Activated naive CD4-positive, alpha-beta T cell treated with anti-CD3 and anti-CD28 coated beads for 36 hours (primary cell): ENCODE measurements at regions of chr17 and their contacts with region 1.

Region 1: DNA sequence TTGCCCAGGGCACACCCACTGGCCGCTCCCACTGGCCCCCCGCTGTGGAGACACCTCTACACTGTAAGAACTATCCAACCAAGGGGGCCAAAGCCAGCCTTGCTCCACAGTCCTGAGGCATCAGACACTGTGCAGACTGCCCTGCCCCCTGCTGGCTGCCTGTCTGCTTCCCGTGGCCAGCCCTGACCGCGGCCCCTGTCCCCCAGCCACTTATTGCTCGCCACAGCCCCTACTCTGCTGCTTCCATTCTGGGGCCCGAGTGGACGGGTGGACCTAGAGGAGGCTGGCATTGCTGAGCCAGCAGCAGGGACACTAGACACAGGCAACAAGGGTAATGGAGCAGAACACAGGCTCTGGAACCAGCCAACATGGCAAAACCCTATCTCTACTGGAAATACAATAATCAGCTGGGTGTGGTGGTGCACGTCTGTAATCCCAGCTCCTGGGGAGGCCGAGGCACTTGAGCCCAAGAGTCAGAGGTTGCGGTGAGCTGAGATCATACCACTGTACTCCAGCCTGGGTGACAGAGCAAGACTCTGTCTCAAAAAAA is 19.7 kb upstream of the LRRC37A3 start:
- DNase-seq: peak; percentile 67
- H3K4me3 Mint-ChIP-seq: no peak overlapping the region
- H3K27ac Mint-ChIP-seq: no peak overlapping the region
- H3K4me1 Mint-ChIP-seq: no peaks in the 10 kb centered on the region
- H3K27me3 Mint-ChIP-seq: no peaks in the 10 kb centered on the region

Region 2: GRCh38 chr17:64781014-64781753 is 157.8 kb before region 1 on chr17:
- CTCF ChIA-PET with region 1: interaction called, 5 read pairs
- intact Hi-C with region 1: loop called (anchors 5 kb)
- DNase-seq: peak; percentile 78
- H3K4me3 Mint-ChIP-seq: peak overlapping the region; percentile 70
- H3K27ac Mint-ChIP-seq: no peak overlapping the region
- H3K4me1 Mint-ChIP-seq: peaks cover 41% of the 10 kb centered on the region
- H3K27me3 Mint-ChIP-seq: peaks cover 9% of the 10 kb centered on the region

Region 3: GRCh38 chr17:65064452-65065019 is 125.5 kb after region 1 on chr17:
- CTCF ChIA-PET with region 1: no interaction called
- intact Hi-C with region 1: no loop called
- DNase-seq: no peak
- H3K4me3 Mint-ChIP-seq: no peak overlapping the region
- H3K27ac Mint-ChIP-seq: no peak overlapping the region
- H3K4me1 Mint-ChIP-seq: no peaks in the 10 kb centered on the region
- H3K27me3 Mint-ChIP-seq: no peaks in the 10 kb centered on the region